Caco-2 (cell line): ENCODE measurements at regions of chr11 and their contacts with region 1.

Region 1: GRCh38 chr11:130213143-130213978 is 53.8 kb downstream of the ST14 start:
- DNase-seq: peak; percentile 70 to 83
- H3K4me3 ChIP-seq: no peak overlapping the region
- H3K4me3 Mint-ChIP-seq: no peak overlapping the region
- H3K27ac Mint-ChIP-seq: no peak overlapping the region
- H3K4me1 ChIP-seq: 0 out of 2 replicates have a peak, but pooled peaks cover 9% of the 10 kb centered on the region
- H3K4me1 Mint-ChIP-seq: peaks cover 9% of the 10 kb centered on the region
- H3K27me3 ChIP-seq: no peaks in the 10 kb centered on the region
- H3K27me3 Mint-ChIP-seq: no peaks in the 10 kb centered on the region
- CTCF ChIP-seq: peak; percentile 98 to 99

Region 2: GRCh38 chr11:129881570-129882170 is 331.7 kb before region 1 on chr11:
- CTCF ChIA-PET with region 1: interaction called, 3 read pairs
- POLR2A ChIA-PET with region 1: no interaction called
- intact Hi-C with region 1: loop called (anchors 1 kb)
- DNase-seq: peak; percentile 72 to 84
- H3K4me3 ChIP-seq: no peak overlapping the region
- H3K4me3 Mint-ChIP-seq: no peak overlapping the region
- H3K27ac Mint-ChIP-seq: no peak overlapping the region
- H3K4me1 ChIP-seq: no peaks in the 10 kb centered on the region
- H3K4me1 Mint-ChIP-seq: no peaks in the 10 kb centered on the region
- H3K27me3 ChIP-seq: no peaks in the 10 kb centered on the region
- H3K27me3 Mint-ChIP-seq: no peaks in the 10 kb centered on the region
- CTCF ChIP-seq: peak; percentile 94 to 96

Region 3: GRCh38 chr11:130314750-130315285 is 101.5 kb after region 1 on chr11 and contains the start of gene ZBTB44:
- CTCF ChIA-PET with region 1: interaction called, 3 read pairs
- POLR2A ChIA-PET with region 1: no interaction called
- intact Hi-C with region 1: loop called (anchors 2 kb)
- DNase-seq: peak; percentile 95 to 97
- H3K4me3 ChIP-seq: peak within 1 kb of the TSS; percentile 62
- H3K4me3 Mint-ChIP-seq: peak within 1 kb of the TSS; percentile 89
- H3K27ac Mint-ChIP-seq: peak within 1 kb of the TSS; percentile 87
- H3K4me1 ChIP-seq: peaks cover 30% of the 10 kb centered on the region
- H3K4me1 Mint-ChIP-seq: peaks cover 50% of the 10 kb centered on the region
- H3K27me3 ChIP-seq: no peaks in the 10 kb centered on the region
- H3K27me3 Mint-ChIP-seq: no peaks in the 10 kb centered on the region
- CTCF ChIP-seq: no peak
- total RNA-seq, gene ZBTB44: 49.5 and 53.6 TPM in 2 replicates

Region 4: DNA sequence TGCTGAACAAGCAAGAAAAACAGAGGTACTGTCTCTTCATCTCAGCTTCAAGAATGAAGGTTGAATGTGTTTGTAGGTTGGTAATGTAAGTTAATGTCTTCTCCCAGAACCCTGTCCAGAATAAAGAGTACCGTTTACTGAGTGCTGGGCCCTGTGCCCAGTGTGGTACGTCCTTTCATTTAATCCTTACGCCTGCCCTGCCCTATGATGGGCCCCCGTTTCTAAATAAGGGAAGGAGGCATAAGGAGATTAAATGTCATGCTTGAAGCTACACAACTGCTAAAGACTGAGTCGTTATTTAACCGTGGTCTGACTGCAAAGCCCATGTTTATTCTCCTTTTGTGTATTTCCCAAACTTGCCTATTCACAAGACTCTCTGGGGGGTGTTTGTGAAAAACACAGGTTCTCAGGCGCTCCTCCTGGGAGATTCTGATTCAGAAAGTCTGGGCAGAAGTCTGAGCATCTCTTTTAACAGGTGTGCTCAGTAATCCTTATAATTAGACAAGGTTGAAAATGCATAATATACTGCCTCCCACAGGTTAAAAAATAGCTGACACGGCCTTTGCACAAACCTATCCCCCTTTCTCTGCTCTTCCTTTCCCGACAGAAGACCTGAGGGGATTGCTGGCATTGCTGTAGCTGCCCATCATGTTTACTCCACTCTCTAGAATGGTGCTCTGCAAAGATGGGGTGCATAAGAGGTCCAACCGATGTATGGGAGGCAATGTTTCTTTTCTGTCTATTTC is 157.7 kb after region 1 on chr11:
- CTCF ChIA-PET with region 1: interaction called, 19 read pairs
- POLR2A ChIA-PET with region 1: no interaction called
- intact Hi-C with region 1: loop called (anchors 1 kb)
- DNase-seq: peak; percentile 17 to 34
- H3K4me3 ChIP-seq: no peak overlapping the region
- H3K4me3 Mint-ChIP-seq: no peak overlapping the region
- H3K27ac Mint-ChIP-seq: no peak overlapping the region
- H3K4me1 ChIP-seq: no peaks in the 10 kb centered on the region
- H3K4me1 Mint-ChIP-seq: peaks cover 8% of the 10 kb centered on the region
- H3K27me3 ChIP-seq: no peaks in the 10 kb centered on the region
- H3K27me3 Mint-ChIP-seq: no peaks in the 10 kb centered on the region
- CTCF ChIP-seq: peak; percentile 26 to 40

Region 5: DNA sequence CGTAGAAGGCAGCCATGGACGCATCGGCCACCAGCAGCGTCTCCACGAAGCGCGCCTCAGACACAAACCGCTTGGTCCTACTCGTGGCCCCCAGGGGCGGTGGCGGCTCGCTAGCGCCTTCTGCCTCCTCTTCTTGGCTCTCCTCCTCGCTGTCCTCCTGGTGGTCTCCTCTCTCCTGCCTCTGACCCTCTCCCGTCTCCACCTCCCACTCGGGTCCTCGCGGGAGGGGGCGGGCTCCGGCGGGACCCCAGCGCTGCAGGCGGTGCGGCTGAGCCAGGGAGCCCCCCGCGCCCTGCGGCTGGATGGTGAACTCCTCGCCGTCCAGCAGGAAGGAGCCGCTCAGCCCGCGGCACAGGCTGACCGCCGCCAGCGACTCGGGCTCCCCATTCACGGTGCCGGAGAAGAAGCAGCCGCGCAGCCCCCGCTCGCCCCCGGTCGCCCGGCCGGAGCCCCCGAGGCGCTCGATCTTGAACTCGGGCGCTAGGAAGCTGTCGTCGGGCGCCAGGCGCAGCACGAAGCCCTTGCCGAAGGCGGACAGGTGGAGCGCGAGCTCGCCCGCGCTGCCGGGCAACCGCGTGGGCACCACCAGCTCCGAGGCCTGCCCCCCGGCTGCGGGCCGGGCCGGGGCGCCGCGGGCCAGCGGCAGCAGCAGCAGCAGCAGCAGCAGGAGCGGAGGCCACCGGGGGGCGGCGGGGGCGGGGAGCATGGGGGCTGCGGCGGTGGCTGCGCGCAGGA is 214.4 kb after region 1 on chr11:
- CTCF ChIA-PET with region 1: interaction called, 8 read pairs
- POLR2A ChIA-PET with region 1: no interaction called
- intact Hi-C with region 1: loop called (anchors 1 kb)
- DNase-seq: peak in 1 of 2 experiments; percentile 42
- H3K4me3 ChIP-seq: peak overlapping the region; percentile 22
- H3K4me3 Mint-ChIP-seq: peak overlapping the region; percentile 56
- H3K27ac Mint-ChIP-seq: no peak overlapping the region
- H3K4me1 ChIP-seq: peaks cover 5% of the 10 kb centered on the region
- H3K4me1 Mint-ChIP-seq: peaks cover 14% of the 10 kb centered on the region
- H3K27me3 ChIP-seq: peaks cover 26% of the 10 kb centered on the region
- H3K27me3 Mint-ChIP-seq: peaks cover 49% of the 10 kb centered on the region
- CTCF ChIP-seq: peak in 1 of 2 experiments; percentile 26

Region 6: DNA sequence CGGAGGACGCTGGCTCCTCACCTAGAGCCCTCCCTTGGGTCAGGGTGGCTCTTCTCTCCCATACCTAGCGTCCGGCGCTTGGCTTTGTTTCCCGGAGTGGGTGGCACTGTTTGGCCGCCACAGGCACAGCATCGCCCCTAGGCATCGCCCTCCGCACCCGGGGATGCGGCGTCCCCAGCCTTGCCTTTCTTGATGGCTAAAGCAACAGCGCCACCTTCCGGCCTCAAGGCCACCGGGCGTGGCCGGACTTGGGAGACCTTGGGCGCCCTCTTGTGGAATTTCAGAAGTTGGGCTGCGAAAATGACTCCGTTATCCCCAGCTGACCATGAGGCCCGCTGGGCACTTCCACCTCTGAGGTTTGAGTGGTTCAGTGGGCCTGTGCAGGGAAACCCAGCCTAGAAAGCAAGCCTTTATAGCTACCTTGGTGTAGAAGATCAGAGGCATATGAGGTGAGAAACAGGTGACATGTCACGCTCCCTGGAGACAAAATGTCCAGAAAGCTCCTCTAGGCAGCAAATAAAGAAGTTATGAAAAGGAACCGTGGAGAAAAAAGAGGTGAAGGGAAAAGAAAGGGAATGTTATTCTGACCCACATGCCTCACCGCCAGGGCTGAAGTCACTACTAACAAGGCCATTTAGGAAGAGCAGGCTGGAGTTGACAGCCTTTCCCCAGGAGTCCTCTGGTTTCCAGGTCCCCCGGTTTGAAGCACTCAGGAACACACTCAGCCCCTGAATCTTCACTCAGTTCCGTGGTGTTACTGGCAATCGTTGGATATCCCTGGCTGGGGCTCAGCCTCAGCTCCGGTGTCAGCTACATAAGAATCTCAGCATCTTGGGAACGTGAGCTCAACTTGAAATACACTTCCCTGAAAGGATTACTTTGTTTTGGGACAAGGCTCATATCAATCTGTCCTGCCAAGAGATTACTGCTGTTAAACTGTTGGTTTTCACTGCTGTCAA is 648.8 kb after region 1 on chr11:
- CTCF ChIA-PET with region 1: no interaction called
- POLR2A ChIA-PET with region 1: no interaction called
- intact Hi-C with region 1: loop called (anchors 10 kb)
- DNase-seq: peak; percentile 92 to 95
- H3K4me3 ChIP-seq: no peak overlapping the region
- H3K4me3 Mint-ChIP-seq: no peak overlapping the region
- H3K27ac Mint-ChIP-seq: no peak overlapping the region
- H3K4me1 ChIP-seq: no peaks in the 10 kb centered on the region
- H3K4me1 Mint-ChIP-seq: peaks cover 5% of the 10 kb centered on the region
- H3K27me3 ChIP-seq: no peaks in the 10 kb centered on the region
- H3K27me3 Mint-ChIP-seq: no peaks in the 10 kb centered on the region
- CTCF ChIP-seq: peak; percentile 100